HCT116 (cell line): ENCODE measurements at regions of chr2 and their contacts with region 1.

Region 1: DNA sequence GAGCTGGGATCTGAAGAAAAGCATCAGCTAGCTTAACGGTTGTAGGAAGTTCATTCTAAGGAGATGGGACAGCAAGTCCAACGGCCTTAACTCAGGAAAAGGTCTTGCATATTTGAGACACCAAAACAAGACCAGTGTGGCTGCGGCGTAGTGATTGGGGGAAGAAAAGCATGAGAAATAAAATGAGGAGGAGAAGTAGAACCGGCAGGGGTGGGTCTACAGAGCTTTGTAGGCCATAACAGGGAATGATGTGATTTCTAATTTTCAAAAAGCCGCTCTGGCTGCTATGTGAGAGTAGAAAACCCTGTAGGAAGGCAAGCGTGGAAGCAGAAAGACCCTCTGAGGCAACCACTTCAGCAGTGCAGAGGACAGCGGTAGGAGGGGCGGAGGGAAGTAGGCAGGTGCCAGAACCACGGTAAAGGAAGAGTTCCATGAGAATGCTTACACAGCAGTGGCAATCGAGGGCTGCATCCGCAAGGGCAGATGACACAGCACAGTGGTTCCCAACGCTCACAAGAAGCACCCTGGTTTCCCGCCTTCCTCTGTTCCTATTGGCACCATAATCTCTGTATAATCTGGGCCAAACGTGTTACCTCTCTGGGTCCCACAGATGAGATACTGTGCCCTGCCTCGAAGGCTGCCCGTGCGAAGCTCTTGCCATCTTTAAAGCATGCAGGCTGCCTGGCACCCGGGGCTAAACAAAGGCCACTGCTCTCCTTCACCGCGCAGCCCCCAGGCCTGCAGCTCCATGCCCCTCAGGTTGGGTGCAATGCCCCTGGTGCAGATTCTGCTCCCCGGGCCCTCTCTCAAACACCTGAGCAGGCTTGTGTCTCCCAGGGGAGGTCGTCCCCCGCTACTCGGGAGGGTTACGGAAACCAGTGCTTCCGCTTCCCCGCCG is 791 bp downstream of the ANKRD39 start:
- DNase-seq: no peak
- ATAC-seq: no peak; the same call in 1 of the 2 replicates
- H3K4me3 ChIP-seq: peak overlapping the region; percentile 84 to 93
- H3K27ac ChIP-seq: peak overlapping the region; percentile 67
- H3K4me1 ChIP-seq: peaks cover 9 to 20% of the 10 kb centered on the region in 2 experiments
- H3K27me3 ChIP-seq: no peaks in the 10 kb centered on the region
- CTCF ChIP-seq: no peak
- POLR2A ChIP-seq: no peak
- RAD21 ChIP-seq: no peak

Region 2: GRCh38 chr2:96024336-96025193 is 832.5 kb before region 1 on chr2:
- CTCF ChIA-PET with region 1: no interaction called
- POLR2A ChIA-PET with region 1: no interaction called
- RAD21 ChIA-PET with region 1: no interaction called
- intact Hi-C with region 1: no loop called
- DNase-seq: no peak
- ATAC-seq: no peak
- H3K4me3 ChIP-seq: no peak overlapping the region
- H3K27ac ChIP-seq: no peak overlapping the region
- H3K4me1 ChIP-seq: no peaks in the 10 kb centered on the region
- H3K27me3 ChIP-seq: no peaks in the 10 kb centered on the region
- CTCF ChIP-seq: no peak
- POLR2A ChIP-seq: no peak
- RAD21 ChIP-seq: no peak

Region 3: GRCh38 chr2:96618604-96619283 is 238.3 kb before region 1 on chr2:
- CTCF ChIA-PET with region 1: no interaction called
- POLR2A ChIA-PET with region 1: no interaction called
- RAD21 ChIA-PET with region 1: no interaction called
- intact Hi-C with region 1: no loop called
- DNase-seq: no peak
- ATAC-seq: no peak
- H3K4me3 ChIP-seq: no peak overlapping the region
- H3K27ac ChIP-seq: no peak overlapping the region
- H3K4me1 ChIP-seq: no peaks in the 10 kb centered on the region
- H3K27me3 ChIP-seq: no peaks in the 10 kb centered on the region
- CTCF ChIP-seq: no peak
- POLR2A ChIP-seq: no peak
- RAD21 ChIP-seq: no peak

Region 4: DNA sequence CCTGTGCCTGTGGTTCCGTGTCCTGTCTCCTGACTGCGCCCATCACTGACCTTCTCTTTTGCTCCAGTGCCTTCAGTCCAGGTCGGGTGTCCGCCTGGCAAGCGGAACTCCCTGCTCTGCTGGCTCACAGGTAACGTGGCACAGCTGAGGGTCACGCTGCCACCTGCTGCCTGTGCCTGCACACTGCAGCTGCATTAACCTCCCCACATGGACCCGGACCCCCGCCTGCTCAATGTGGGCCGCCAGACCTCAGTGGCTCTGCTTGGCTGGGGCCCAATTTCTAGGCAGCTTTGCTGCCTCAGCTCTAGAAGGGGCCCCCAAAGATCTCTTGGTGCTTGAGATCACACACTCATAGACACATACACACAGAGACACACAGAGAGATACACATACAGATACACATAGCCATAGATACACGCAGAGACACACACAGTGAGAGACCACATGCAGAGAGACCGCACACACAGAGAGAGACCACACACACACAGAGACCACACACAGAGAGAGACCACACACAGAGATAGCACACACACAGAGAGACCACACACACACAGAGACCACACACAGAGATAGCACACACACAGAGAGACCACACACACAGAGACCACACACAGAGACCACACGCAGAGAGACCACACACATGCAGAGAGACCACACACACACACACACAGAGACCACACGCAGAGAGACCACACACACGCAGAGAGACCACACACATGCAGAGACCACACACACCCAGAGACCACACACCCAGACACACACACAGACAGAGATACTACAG is 55.8 kb before region 1 on chr2:
- CTCF ChIA-PET with region 1: no interaction called
- POLR2A ChIA-PET with region 1: no interaction called
- RAD21 ChIA-PET with region 1: no interaction called
- intact Hi-C with region 1: no loop called
- DNase-seq: no peak
- ATAC-seq: peak; percentile 96
- H3K4me3 ChIP-seq: no peak overlapping the region
- H3K27ac ChIP-seq: no peak overlapping the region; the same call in 1 of the 2 replicates
- H3K4me1 ChIP-seq: peaks cover 0 to 5% of the 10 kb centered on the region in 2 experiments; a peak in 1 of 4 replicates
- H3K27me3 ChIP-seq: no peaks in the 10 kb centered on the region
- CTCF ChIP-seq: peak; percentile 53 to 87 (median 76); a peak in 5 of 6 replicates
- POLR2A ChIP-seq: no peak
- RAD21 ChIP-seq: peak; percentile 90

Region 5: GRCh38 chr2:96868555-96869280 is 11.7 kb after region 1 on chr2:
- CTCF ChIA-PET with region 1: interaction called, 17 read pairs
- POLR2A ChIA-PET with region 1: interaction called, 20 read pairs
- RAD21 ChIA-PET with region 1: interaction called, 5 to 6 read pairs
- intact Hi-C with region 1: no loop called
- DNase-seq: peak; percentile 54
- ATAC-seq: peak; percentile 76
- H3K4me3 ChIP-seq: peak overlapping the region; percentile 66 to 82
- H3K27ac ChIP-seq: peak overlapping the region; percentile 93
- H3K4me1 ChIP-seq: peaks cover 22 to 36% of the 10 kb centered on the region in 2 experiments
- H3K27me3 ChIP-seq: no peaks in the 10 kb centered on the region
- CTCF ChIP-seq: peak in 2 of 3 experiments; percentile 72 to 79; a peak in 5 of 6 replicates
- POLR2A ChIP-seq: peak; percentile 28
- RAD21 ChIP-seq: no peak

Region 6: GRCh38 chr2:96951093-96951654 is 94.1 kb after region 1 on chr2:
- CTCF ChIA-PET with region 1: interaction called, 42 read pairs
- POLR2A ChIA-PET with region 1: interaction called, 4 read pairs
- RAD21 ChIA-PET with region 1: interaction called, 3 to 13 read pairs
- intact Hi-C with region 1: loop called (anchors 1 kb)
- DNase-seq: peak; percentile 50
- ATAC-seq: peak; percentile 100
- H3K4me3 ChIP-seq: no peak overlapping the region
- H3K27ac ChIP-seq: no peak overlapping the region
- H3K4me1 ChIP-seq: peaks cover 0 to 6% of the 10 kb centered on the region in 2 experiments; a peak in 1 of 4 replicates
- H3K27me3 ChIP-seq: 0 out of 2 replicates have a peak, but pooled peaks cover 2% of the 10 kb centered on the region
- CTCF ChIP-seq: peak; percentile 91 to 95 (median 94)
- POLR2A ChIP-seq: no peak
- RAD21 ChIP-seq: peak; percentile 98

Region 7: GRCh38 chr2:96960153-96960961 is 103.3 kb after region 1 on chr2:
- CTCF ChIA-PET with region 1: interaction called, 12 read pairs
- POLR2A ChIA-PET with region 1: no interaction called
- RAD21 ChIA-PET with region 1: interaction called in 1 of 2 experiments, 3 read pairs
- intact Hi-C with region 1: loop called (anchors 1 kb)
- DNase-seq: peak; percentile 79
- ATAC-seq: peak; percentile 99
- H3K4me3 ChIP-seq: no peak overlapping the region
- H3K27ac ChIP-seq: no peak overlapping the region
- H3K4me1 ChIP-seq: peaks cover 4 to 11% of the 10 kb centered on the region in 2 experiments; a peak in 2 of 4 replicates
- H3K27me3 ChIP-seq: no peaks in the 10 kb centered on the region
- CTCF ChIP-seq: peak; percentile 91 to 97 (median 93)
- POLR2A ChIP-seq: no peak
- RAD21 ChIP-seq: peak; percentile 96